GM10248 (cell line): ENCODE measurements at regions of chr9 and their contacts with region 1.

Region 1: DNA sequence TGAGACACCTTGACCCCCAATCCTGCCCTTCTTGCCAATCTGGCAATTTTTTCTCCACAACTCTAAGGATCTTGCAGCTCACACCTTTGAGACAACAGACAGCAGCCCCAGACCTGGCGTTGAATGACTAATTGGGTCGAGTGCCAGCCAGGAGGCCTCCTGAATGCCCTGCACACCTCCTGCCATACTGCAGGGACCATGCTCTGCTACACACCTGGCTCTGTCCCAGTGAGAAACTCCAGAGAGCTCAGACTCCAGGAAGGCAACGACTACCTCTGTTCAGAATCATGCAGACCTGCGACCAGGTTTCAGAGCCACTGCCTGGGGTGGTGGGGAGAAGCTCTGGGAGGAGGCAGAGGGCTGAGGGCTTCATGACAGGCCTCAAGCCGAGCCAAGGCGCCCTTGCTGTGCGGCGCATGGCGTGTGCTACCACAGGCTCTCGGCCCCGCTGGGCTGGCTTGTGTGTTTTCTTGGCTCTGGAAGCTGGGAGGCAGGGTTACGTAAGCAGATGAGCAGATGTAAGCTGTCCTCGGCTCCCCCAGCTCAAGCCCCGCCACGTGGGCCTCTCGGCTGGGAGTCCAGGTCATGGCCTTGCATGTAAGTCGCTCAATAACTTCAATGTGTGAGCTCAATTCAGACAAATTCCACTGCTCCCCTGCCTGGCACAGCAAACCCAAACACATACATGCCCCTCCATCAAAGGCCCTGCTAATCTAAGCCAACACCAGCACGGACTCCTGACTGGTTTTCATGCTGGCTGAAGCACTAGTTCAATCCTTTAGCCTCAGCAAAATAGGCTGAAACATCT is 27.5 kb downstream of the B4GALT1 start:
- DNase-seq: no peak
- CTCF ChIP-seq: no peak

Region 2: GRCh38 chr9:33151007-33151557 is 11.5 kb after region 1 on chr9:
- CTCF ChIA-PET with region 1: interaction called, 26 read pairs
- POLR2A ChIA-PET with region 1: interaction called, 6 read pairs
- DNase-seq: no peak
- CTCF ChIP-seq: no peak

Region 3: GRCh38 chr9:33159760-33160127 is 20.1 kb after region 1 on chr9:
- CTCF ChIA-PET with region 1: interaction called, 52 read pairs
- POLR2A ChIA-PET with region 1: interaction called, 6 read pairs
- DNase-seq: no peak
- CTCF ChIP-seq: no peak

Region 4: GRCh38 chr9:33198165-33198564 is 58.5 kb after region 1 on chr9:
- CTCF ChIA-PET with region 1: no interaction called
- POLR2A ChIA-PET with region 1: no interaction called
- DNase-seq: no peak
- CTCF ChIP-seq: no peak

Region 5: GRCh38 chr9:33354651-33355211 is 215.1 kb after region 1 on chr9:
- CTCF ChIA-PET with region 1: no interaction called
- POLR2A ChIA-PET with region 1: no interaction called
- DNase-seq: no peak
- CTCF ChIP-seq: no peak